ENCODE measurements at regions of chr12 and their contacts with region 1.

Region 1: DNA sequence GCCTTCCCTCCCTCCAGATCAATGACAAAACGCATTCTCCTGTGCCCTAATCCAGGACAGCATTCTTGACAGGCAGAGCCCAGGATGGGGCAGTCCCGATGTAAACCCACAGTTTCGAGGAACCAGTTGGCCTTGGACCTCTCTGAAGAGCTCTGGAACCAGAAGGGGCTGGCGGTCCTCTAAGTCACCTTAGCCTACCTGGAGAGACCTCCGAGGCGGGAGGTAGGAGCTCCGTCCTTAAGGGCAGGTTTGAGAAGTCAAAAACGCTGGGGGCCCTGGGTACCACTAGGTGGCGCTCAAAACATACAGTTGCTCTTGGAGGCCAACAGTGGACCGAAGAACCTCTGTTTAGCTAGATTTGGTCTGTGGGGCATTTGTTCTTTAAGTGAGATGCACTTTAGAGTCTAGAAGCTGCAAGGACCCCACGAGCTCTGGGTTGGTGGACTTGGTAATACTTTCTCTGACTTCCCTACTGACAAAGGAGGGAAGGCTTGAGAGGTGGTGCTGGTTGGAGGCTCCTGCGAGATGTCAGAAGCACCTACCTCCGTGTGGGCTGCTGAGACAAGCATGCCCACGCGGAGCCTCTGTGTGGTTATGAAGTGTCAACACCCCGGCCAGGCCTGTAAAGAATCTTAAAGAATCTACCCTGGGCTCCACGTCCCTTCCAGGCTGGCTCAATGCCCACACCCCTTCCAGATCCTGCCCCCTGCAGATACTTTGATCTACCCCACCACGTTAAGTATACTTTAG is 74.8 kb upstream of the CHST11 start:
- DNase-seq: peak; percentile 91
- H3K4me3 Mint-ChIP-seq: no peak overlapping the region
- H3K27ac Mint-ChIP-seq: no peak overlapping the region
- H3K4me1 Mint-ChIP-seq: peaks cover 10% of the 10 kb centered on the region
- H3K27me3 Mint-ChIP-seq: no peaks in the 10 kb centered on the region

Region 2: DNA sequence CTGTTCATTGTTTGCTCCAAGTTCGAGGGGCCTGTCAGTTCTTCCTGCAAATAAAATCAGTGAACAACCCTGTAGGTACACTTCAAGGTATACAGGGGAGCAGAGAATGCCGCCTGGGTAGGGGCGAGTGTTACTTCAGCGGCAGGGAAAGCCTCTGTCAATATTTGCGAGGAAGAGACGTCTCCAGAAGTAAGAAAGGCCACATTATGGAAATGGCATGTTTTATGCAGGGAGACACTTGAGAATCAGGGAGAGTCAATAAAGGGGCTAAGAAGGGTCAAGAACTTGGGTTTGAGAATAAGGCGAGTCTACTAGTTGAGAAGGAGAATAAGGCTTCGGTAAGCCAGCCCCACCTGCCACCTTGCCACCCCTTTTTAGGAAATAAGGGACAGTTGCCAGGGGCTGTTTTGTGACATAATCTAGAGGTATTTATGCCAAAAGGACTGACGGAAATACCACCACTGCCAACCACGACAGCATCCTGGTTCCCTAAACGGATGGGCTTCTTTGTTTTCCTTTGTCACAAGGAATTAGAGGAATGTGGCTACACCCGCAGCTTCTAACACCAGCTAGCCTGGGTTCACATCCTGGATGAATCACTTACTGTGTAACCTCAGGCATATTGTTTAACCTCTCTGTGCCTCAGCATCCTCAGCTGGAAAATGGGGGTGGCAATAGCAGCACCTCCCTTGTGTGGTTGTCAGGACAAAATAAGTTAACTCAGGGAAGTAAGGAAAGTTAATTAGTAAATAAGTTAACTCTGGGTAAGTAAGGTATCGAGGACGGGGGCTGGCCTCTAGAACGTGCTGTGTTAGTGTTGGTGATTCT is 10.6 kb before region 1 on chr12:
- CTCF ChIA-PET with region 1: interaction called, 20 read pairs
- intact Hi-C with region 1: no loop called
- DNase-seq: no peak
- H3K4me3 Mint-ChIP-seq: no peak overlapping the region
- H3K27ac Mint-ChIP-seq: no peak overlapping the region
- H3K4me1 Mint-ChIP-seq: peaks cover 11% of the 10 kb centered on the region
- H3K27me3 Mint-ChIP-seq: no peaks in the 10 kb centered on the region

Region 3: DNA sequence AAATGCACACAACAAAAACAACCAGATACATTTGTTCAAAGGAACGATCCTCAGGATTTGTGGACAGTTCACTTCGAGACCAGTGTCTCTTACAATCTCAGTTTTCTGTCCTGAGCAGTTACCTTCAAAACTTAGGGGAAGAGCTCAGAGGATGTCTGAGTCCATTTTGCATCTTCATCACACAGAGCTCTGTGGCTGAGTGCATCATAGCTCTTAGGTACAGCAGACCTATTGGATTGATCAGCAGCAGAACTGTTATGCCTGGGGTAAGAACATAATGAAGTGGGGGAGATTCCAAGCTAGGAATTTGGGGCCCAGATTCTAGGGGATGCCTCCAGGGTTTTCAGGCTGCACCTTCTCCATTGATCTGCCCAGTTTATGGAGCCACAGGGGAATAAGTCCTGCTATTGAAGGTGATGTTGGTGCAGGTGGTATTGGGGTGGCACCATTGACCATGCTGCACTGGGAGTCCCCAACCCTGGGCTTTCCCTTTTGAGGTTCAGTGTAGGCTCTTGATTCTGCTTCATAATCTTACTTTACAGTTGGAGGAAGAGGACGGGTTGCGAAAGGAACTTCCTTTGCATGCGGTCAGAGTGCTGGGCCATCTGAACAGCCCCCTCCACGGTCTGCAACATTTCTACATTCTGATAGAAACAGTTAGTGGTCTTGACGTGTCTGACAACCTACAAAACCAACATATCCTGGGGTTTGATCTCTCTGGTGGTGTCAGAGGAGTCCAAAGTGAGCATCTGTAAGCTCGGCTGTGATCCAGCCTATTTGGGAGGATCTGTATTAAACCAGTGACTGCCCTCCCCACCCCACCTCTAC is 187.7 kb after region 1 on chr12:
- CTCF ChIA-PET with region 1: interaction called, 14 read pairs
- intact Hi-C with region 1: no loop called
- DNase-seq: peak; percentile 64
- H3K4me3 Mint-ChIP-seq: no peak overlapping the region
- H3K27ac Mint-ChIP-seq: peak overlapping the region; percentile 17
- H3K4me1 Mint-ChIP-seq: peaks cover 49% of the 10 kb centered on the region
- H3K27me3 Mint-ChIP-seq: no peaks in the 10 kb centered on the region

Region 4: GRCh38 chr12:104825408-104825807 is 443.5 kb after region 1 on chr12:
- CTCF ChIA-PET with region 1: interaction called, 10 read pairs
- intact Hi-C with region 1: loop called (anchors 1 kb)
- DNase-seq: peak; percentile 32
- H3K4me3 Mint-ChIP-seq: no peak overlapping the region
- H3K27ac Mint-ChIP-seq: no peak overlapping the region
- H3K4me1 Mint-ChIP-seq: peaks cover 6% of the 10 kb centered on the region
- H3K27me3 Mint-ChIP-seq: no peaks in the 10 kb centered on the region

Region 5: DNA sequence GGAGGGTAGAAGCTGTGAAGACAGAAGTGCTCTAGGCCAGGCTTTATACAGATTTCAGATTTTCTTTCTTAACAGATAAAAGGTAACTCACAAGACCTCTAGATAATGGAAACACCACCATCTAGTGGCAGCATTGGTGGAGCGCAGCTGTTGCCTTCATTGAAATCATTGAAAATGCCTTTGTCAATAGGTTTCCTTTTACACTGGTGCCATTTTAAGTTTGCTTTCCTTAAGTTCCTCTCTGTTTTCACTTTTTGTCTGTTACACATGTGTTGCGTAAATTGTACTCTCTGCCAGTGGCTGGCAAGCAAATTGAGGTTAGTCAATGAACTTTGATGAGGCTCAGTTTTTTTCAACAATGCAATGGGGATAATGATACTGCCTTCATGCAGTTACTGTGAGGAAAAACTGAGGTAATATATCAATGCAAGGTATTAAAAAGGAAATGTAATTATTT is 671.2 kb after region 1 on chr12:
- CTCF ChIA-PET with region 1: interaction called, 24 read pairs
- intact Hi-C with region 1: loop called (anchors 1 kb)
- DNase-seq: peak; percentile 89
- H3K4me3 Mint-ChIP-seq: no peak overlapping the region
- H3K27ac Mint-ChIP-seq: no peak overlapping the region
- H3K4me1 Mint-ChIP-seq: no peaks in the 10 kb centered on the region
- H3K27me3 Mint-ChIP-seq: no peaks in the 10 kb centered on the region

Region 6: GRCh38 chr12:105158876-105159275 is 777.0 kb after region 1 on chr12:
- CTCF ChIA-PET with region 1: no interaction called
- intact Hi-C with region 1: no loop called
- DNase-seq: no peak
- H3K4me3 Mint-ChIP-seq: no peak overlapping the region
- H3K27ac Mint-ChIP-seq: no peak overlapping the region
- H3K4me1 Mint-ChIP-seq: peaks cover 7% of the 10 kb centered on the region
- H3K27me3 Mint-ChIP-seq: no peaks in the 10 kb centered on the region

Measured in activated naive CD4-positive, alpha-beta T cell treated with anti-CD3 and anti-CD28 coated beads for 36 hours (primary cell).